ENCODE measurements at regions of chr2 and their contacts with region 1.

Region 1: DNA sequence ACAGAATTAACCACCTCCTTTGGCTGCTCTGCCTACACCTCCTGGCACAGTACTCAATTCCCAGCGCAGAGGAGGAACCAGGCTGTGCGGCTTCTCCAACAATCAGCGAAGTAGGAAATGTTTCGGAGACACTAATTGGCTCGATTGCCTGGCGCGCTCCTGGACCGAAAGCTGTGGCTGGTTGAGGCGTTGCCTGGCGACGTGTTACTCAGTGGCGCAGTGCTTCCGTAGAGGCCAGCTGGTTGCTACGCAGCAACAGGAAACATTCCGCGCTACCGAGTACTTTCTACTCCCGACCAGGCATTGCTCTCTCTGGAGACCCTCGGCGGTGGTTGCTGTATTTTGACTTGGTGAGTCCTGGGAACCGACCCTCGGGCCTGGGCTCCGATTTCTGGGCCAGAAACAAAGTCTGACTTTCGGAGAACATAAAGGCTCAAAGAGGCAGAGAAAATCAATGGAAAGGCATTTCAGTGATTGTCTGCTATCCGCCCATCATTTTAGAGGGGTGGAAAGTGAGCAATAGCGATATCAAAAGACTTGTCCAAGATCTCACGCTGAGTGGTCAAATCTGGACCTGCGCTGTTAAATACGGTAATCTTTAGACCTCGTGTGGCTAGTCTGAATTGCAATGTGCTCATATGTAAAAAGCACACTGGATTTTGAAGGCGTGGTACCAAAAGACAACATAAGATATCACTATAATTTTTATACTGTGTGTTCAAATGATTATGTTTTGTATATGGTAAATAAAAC is at the start of gene DNAH6:
- DNase-seq: peak; percentile 93
- ATAC-seq: peak; percentile 100
- H3K4me3 Mint-ChIP-seq: peak within 1 kb of the TSS; percentile 72
- H3K27ac Mint-ChIP-seq: peak within 1 kb of the TSS; percentile 30
- H3K4me1 Mint-ChIP-seq: peaks cover 11% of the 10 kb centered on the region
- H3K27me3 Mint-ChIP-seq: no peaks in the 10 kb centered on the region
- total RNA-seq, gene DNAH6: 1.1 to 1.3 TPM

Region 2: GRCh38 chr2:84459018-84459943 is 57.1 kb before region 1 on chr2 and contains the start of gene SUCLG1:
- CTCF ChIA-PET with region 1: no interaction called
- POLR2A ChIA-PET with region 1: no interaction called
- intact Hi-C with region 1: loop called in 1 of 2 experiments (anchors 1 kb)
- DNase-seq: peak; percentile 92
- ATAC-seq: peak; percentile 93
- H3K4me3 Mint-ChIP-seq: peak within 1 kb of the TSS; percentile 94
- H3K27ac Mint-ChIP-seq: peak within 1 kb of the TSS; percentile 98
- H3K4me1 Mint-ChIP-seq: peaks cover 34% of the 10 kb centered on the region
- H3K27me3 Mint-ChIP-seq: no peaks in the 10 kb centered on the region
- total RNA-seq, gene SUCLG1: 60.7 to 68.9 TPM